ENCODE measurements at regions of chr7 and their contacts with region 1.

Region 1: DNA sequence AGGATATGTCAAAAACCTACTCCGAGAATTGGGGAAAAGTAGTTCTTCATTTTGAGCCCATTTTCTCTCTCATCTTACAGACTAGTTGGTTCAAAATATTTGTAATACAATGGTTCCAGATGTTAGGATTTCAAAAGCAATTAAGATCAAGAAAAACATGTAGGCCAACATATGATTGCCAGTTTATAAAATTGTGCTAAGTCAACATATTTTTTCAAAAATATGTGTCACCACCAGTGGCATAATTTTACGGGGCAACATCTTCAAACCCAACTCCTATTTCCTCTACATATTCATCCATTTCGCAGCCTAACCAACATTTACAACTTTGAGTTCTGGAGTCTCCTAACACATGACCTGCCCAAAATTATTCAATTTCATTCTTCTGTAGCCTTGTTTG is 514.5 kb upstream of the TPK1 start:
- DNase-seq: no peak
- H3K4me3 ChIP-seq: no peak overlapping the region
- H3K27ac ChIP-seq: no peak overlapping the region
- H3K4me1 ChIP-seq: no peaks in the 10 kb centered on the region
- H3K27me3 ChIP-seq: no peaks in the 10 kb centered on the region
- CTCF ChIP-seq: no peak
- EP300 ChIP-seq: no peak
- POLR2A ChIP-seq: no peak

Region 2: GRCh38 chr7:145431834-145432233 is 81.5 kb after region 1 on chr7:
- intact Hi-C with region 1: loop called (anchors 10 kb)
- DNase-seq: no peak
- H3K4me3 ChIP-seq: no peak overlapping the region
- H3K27ac ChIP-seq: no peak overlapping the region
- H3K4me1 ChIP-seq: no peaks in the 10 kb centered on the region
- H3K27me3 ChIP-seq: no peaks in the 10 kb centered on the region
- CTCF ChIP-seq: no peak
- EP300 ChIP-seq: no peak
- POLR2A ChIP-seq: no peak

Region 3: DNA sequence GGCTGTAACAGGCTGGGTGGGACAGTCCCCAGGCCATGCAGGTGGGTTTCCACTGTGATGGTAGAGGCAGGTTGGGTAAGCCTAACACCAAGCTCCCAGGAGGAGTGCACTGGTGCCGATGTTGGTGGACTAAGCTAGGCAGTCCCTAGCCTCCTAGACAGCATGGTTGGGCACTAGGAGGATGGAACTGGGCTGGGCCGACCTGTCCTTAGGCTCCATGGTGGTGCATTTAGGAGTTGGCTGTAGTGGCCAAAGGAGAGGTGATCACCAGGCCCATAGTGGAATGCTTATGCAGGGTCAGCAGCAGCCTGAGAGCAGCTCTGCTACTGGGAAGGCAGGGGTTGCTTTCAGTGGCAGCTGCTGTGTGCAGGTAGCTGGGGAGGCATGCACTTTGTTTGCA is 518.6 kb after region 1 on chr7:
- intact Hi-C with region 1: no loop called
- DNase-seq: no peak
- H3K4me3 ChIP-seq: no peak overlapping the region
- H3K27ac ChIP-seq: no peak overlapping the region
- H3K4me1 ChIP-seq: no peaks in the 10 kb centered on the region
- H3K27me3 ChIP-seq: no peaks in the 10 kb centered on the region
- CTCF ChIP-seq: no peak
- EP300 ChIP-seq: no peak
- POLR2A ChIP-seq: no peak